Activated CD4-positive, alpha-beta memory T cell treated with anti-CD3 and anti-CD28 coated beads for 36 hours (primary cell): ENCODE measurements at regions of chr14 and their contacts with region 1.

Region 1: GRCh38 chr14:91649930-91650329 is 82.0 kb downstream of the CATSPERB start:
- DNase-seq: no peak
- H3K4me3 Mint-ChIP-seq: no peak overlapping the region
- H3K27ac Mint-ChIP-seq: no peak overlapping the region
- H3K4me1 Mint-ChIP-seq: no peaks in the 10 kb centered on the region
- H3K27me3 Mint-ChIP-seq: no peaks in the 10 kb centered on the region

Region 2: GRCh38 chr14:91439345-91439744 is 210.6 kb before region 1 on chr14:
- CTCF ChIA-PET with region 1: no interaction called
- POLR2A ChIA-PET with region 1: no interaction called
- intact Hi-C with region 1: no loop called
- DNase-seq: no peak
- H3K4me3 Mint-ChIP-seq: no peak overlapping the region
- H3K27ac Mint-ChIP-seq: no peak overlapping the region
- H3K4me1 Mint-ChIP-seq: no peaks in the 10 kb centered on the region
- H3K27me3 Mint-ChIP-seq: peaks cover 10% of the 10 kb centered on the region

Region 3: GRCh38 chr14:91893007-91893406 is 243.1 kb after region 1 on chr14:
- CTCF ChIA-PET with region 1: interaction called, 6 read pairs
- POLR2A ChIA-PET with region 1: no interaction called
- intact Hi-C with region 1: loop called (anchors 5 kb)
- DNase-seq: peak; percentile 52
- H3K4me3 Mint-ChIP-seq: no peak overlapping the region
- H3K27ac Mint-ChIP-seq: peak overlapping the region; percentile 81
- H3K4me1 Mint-ChIP-seq: peaks cover 48% of the 10 kb centered on the region
- H3K27me3 Mint-ChIP-seq: no peaks in the 10 kb centered on the region

Region 4: DNA sequence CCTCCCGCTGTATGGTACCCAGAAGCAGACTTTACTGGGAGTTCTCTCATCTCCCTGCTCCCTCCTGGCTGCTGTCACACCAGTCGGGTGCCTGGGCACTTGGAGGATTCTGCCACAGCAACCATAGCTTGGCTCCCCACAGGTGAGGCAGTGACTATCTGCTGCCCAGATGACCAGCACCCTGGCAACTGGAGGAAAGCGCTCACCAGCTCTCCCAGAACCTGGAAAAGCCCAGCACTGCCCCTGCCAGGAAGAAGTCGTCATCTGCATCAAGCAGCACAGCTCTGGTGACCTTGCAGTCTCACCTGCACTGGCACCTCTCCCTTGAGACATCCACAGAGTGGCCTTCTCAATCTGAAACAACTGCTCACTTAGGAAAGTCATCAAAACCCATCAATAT is 249.3 kb after region 1 on chr14:
- CTCF ChIA-PET with region 1: interaction called, 13 read pairs
- POLR2A ChIA-PET with region 1: no interaction called
- intact Hi-C with region 1: loop called (anchors 5 kb)
- DNase-seq: peak; percentile 50
- H3K4me3 Mint-ChIP-seq: no peak overlapping the region
- H3K27ac Mint-ChIP-seq: no peak overlapping the region
- H3K4me1 Mint-ChIP-seq: peaks cover 3% of the 10 kb centered on the region
- H3K27me3 Mint-ChIP-seq: no peaks in the 10 kb centered on the region

Region 5: DNA sequence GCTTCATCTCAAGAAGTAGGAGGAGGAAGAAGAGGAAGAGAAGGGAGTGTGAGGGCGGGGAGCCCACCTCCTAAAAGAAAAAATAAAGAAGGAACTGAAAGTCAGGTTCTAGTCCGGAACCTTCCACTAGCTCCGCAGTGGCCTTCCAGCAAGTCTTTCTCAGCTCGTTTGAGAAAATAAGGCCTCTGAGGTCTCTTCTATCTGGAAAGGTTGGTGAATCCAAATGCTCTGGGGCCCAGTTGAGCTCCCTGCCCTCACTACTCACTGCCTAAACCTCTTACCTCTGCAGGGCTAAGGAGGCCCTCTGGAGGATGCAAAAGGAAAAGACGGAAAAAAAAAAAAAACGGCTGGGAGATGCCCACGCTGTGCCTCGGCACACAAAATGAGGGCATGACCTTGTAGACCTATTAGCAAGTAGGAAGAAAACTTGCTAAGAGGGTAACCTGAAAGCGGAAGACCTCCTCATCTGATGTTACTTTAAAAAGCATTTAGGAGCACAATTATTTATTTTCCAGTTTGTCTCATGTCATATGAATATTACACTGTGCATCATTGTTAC is 261.6 kb after region 1 on chr14:
- CTCF ChIA-PET with region 1: interaction called, 14 read pairs
- POLR2A ChIA-PET with region 1: no interaction called
- intact Hi-C with region 1: loop called (anchors 5 kb)
- DNase-seq: peak; percentile 55
- H3K4me3 Mint-ChIP-seq: no peak overlapping the region
- H3K27ac Mint-ChIP-seq: no peak overlapping the region
- H3K4me1 Mint-ChIP-seq: peaks cover 5% of the 10 kb centered on the region
- H3K27me3 Mint-ChIP-seq: no peaks in the 10 kb centered on the region